Mammary epithelial cell (primary cell): ENCODE measurements at regions of chr17 and their contacts with region 1.

Region 1: DNA sequence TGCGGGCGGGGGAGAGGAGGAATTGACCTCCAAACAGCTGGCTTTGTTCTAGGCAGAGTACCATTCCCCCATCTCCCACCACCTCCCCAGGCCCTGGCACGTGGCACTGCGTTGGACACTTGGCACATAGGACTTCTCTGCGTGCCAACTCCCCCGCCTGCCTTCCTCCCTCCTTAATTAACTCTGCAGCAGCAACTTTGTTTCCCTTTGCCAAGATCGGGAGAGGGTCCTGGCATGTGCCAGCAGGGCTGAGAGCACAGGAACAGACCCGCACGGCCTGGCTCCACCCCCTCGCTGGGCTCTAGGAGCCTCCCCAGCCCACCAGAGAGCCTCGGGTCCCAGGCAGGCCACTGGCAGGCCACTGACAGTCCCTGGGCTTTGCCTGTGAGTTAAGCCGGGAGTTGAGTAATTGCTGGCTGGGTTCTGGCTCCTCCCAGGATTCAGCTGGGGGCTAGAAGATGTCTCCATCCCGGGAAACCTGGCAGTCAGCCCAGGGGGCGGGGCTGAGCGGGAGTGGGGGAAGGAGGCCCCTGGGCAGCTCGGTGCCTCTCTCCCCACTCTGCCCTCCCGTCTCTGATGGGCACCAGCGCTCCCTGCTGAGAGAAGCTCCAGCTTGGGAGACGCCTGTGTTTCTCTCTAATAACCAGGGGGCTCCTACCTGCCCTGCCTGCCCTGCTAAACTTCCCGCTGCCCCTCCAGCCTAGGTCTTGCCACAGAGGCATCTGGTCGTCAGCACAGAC is 224.0 kb upstream of the TNRC6C start:
- DNase-seq: no peak
- H3K4me3 ChIP-seq: no peak overlapping the region
- H3K27ac ChIP-seq: no peak overlapping the region
- H3K4me1 ChIP-seq: peaks cover 3% of the 10 kb centered on the region
- H3K27me3 ChIP-seq: no peaks in the 10 kb centered on the region
- CTCF ChIP-seq: peak in 1 of 2 donors; percentile 6

Region 2: GRCh38 chr17:77690271-77691161 is 44.0 kb before region 1 on chr17:
- CTCF ChIA-PET with region 1: no interaction called
- dilution Hi-C with region 1: no loop called
- in situ Hi-C with region 1: no loop called
- intact Hi-C with region 1: no loop called
- DNase-seq: no peak
- H3K4me3 ChIP-seq: no peak overlapping the region
- H3K27ac ChIP-seq: no peak overlapping the region
- H3K4me1 ChIP-seq: peaks cover 7% of the 10 kb centered on the region
- H3K27me3 ChIP-seq: peaks cover 16% of the 10 kb centered on the region
- CTCF ChIP-seq: no peak

Region 3: DNA sequence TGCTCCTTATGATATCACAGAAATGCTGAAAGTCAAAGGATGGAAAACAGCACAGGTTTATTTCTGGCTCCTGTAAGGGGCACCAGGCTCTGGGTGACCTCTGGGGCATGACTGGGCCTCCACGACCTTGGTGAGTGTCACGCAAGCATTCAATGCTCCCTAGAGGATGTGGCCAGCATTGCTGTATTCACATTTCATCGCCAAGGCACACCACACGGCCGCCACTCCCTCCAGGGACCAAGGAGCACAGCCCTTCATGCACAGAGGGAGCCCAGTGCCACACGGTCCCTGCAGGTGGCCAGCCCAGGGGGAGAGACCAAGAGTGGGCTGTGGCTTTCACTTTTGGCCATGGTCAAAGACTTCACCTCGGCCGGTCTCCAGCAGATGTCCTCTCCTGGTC is 86.6 kb after region 1 on chr17:
- CTCF ChIA-PET with region 1: no interaction called
- dilution Hi-C with region 1: loop called (anchors 5 kb)
- in situ Hi-C with region 1: no loop called
- intact Hi-C with region 1: no loop called
- DNase-seq: no peak
- H3K4me3 ChIP-seq: no peak overlapping the region
- H3K27ac ChIP-seq: no peak overlapping the region
- H3K4me1 ChIP-seq: no peaks in the 10 kb centered on the region
- H3K27me3 ChIP-seq: peaks cover 2% of the 10 kb centered on the region
- CTCF ChIP-seq: no peak